Spleen (tissue), 13 donors: ENCODE measurements at regions of chr7 and their contacts with region 1.

Region 1: GRCh38 chr7:101804967-101805366 is 12.5 kb upstream of the CUX1 start:
- DNase-seq: peak; percentile 41
- H3K4me3 ChIP-seq: no peak overlapping the region
- H3K27ac ChIP-seq: no peak overlapping the region
- H3K4me1 ChIP-seq: peaks cover 0 to 20% (median 7%) of the 10 kb centered on the region in 6 donors
- H3K27me3 ChIP-seq: peaks cover 0 to 33% (median 26%) of the 10 kb centered on the region in 7 donors
- CTCF ChIP-seq: peak in 3 of 11 experiments; percentile 10 to 24 (median 11)
- POLR2A ChIP-seq: no peak

Region 2: GRCh38 chr7:101743241-101743994 is 61.5 kb before region 1 on chr7:
- intact Hi-C with region 1: loop called (anchors 10 kb)
- DNase-seq: peak; percentile 88
- H3K4me3 ChIP-seq: peak overlapping the region; percentile 35 to 76 (median 50)
- H3K27ac ChIP-seq: no peak overlapping the region
- H3K4me1 ChIP-seq: peaks cover 0 to 70% (median 38%) of the 10 kb centered on the region in 6 donors
- H3K27me3 ChIP-seq: peaks cover 0 to 33% (median 0%) of the 10 kb centered on the region in 7 donors
- CTCF ChIP-seq: peak in 10 of 11 experiments; percentile 15 to 70 (median 46)
- POLR2A ChIP-seq: no peak